ENCODE measurements at regions of chr9 and their contacts with region 1.

Region 1: GRCh38 chr9:114958021-114958843 is 27.8 kb upstream of the TNFSF8 start:
- DNase-seq: no peak
- ATAC-seq: peak; percentile 72
- H3K4me3 ChIP-seq: no peak overlapping the region
- H3K27ac ChIP-seq: no peak overlapping the region
- H3K4me1 ChIP-seq: no peaks in the 10 kb centered on the region
- H3K27me3 ChIP-seq: no peaks in the 10 kb centered on the region; a peak in 1 of 4 replicates
- CTCF ChIP-seq: no peak
- EP300 ChIP-seq: no peak
- POLR2A ChIP-seq: no peak
- RAD21 ChIP-seq: no peak

Region 2: GRCh38 chr9:114811966-114812636 is 146.1 kb before region 1 on chr9:
- CTCF ChIA-PET with region 1: no interaction called
- POLR2A ChIA-PET with region 1: no interaction called
- RAD21 ChIA-PET with region 1: no interaction called
- SMC1A ChIA-PET with region 1: no interaction called
- in situ Hi-C with region 1: no loop called
- intact Hi-C with region 1: no loop called
- DNase-seq: no peak
- ATAC-seq: no peak
- H3K4me3 ChIP-seq: no peak overlapping the region
- H3K27ac ChIP-seq: no peak overlapping the region
- H3K4me1 ChIP-seq: no peaks in the 10 kb centered on the region
- H3K27me3 ChIP-seq: 0 out of 4 replicates have a peak, but pooled peaks cover 0 to 3% of the 10 kb centered on the region in 2 experiments
- CTCF ChIP-seq: no peak
- EP300 ChIP-seq: no peak
- POLR2A ChIP-seq: no peak
- RAD21 ChIP-seq: no peak

Region 3: DNA sequence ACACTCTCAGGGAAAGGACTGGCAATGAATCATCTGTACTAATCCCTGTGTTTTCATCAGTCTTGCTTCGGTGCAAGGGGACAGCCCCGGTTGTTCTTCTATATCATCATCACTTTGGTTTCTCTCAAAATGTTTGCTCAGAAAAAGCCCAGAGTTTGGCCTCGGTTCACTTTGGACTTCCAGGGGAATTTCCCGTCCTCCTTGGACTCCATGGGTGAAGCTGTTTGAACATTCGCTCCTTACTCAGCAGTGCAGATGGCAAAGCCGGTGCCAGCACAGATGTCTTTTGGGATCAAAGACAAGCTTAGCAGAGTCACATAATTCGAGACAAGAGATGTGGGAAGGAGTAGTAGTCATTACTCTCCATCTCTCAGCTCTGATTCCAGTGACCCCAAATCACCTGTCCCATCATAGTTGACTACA is 42.0 kb after region 1 on chr9:
- CTCF ChIA-PET with region 1: no interaction called
- POLR2A ChIA-PET with region 1: no interaction called
- RAD21 ChIA-PET with region 1: no interaction called
- SMC1A ChIA-PET with region 1: no interaction called
- in situ Hi-C with region 1: no loop called
- intact Hi-C with region 1: loop called (anchors 5 kb)
- DNase-seq: no peak
- ATAC-seq: peak; percentile 71
- H3K4me3 ChIP-seq: no peak overlapping the region
- H3K27ac ChIP-seq: no peak overlapping the region
- H3K4me1 ChIP-seq: no peaks in the 10 kb centered on the region
- H3K27me3 ChIP-seq: peaks cover 3 to 8% of the 10 kb centered on the region in 2 experiments; a peak in 2 of 4 replicates
- CTCF ChIP-seq: no peak
- EP300 ChIP-seq: no peak
- POLR2A ChIP-seq: no peak
- RAD21 ChIP-seq: no peak

Measured in GM12878 (cell line).